ENCODE measurements at regions of chr19 and their contacts with region 1.

Region 1: DNA sequence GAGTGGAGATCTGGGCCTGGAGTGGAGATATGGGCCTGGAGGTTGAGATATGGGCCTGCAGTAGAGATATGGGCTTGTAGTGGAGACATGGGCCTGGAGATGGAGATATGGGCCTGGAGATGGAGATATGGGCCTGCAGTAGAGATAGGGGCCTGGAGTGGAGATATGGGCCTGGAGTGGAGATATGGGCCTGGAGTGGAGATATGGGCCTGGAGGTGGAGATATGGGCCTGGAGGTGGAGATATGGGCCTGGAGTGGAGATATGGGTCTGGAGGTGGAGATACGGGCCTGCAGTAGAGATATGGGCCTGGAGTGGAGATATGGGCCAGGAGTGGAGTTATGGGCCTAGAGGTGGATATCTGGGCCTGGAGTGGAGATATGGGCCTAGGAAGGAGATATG is 402 bp downstream of the KIR2DL3 start:
- DNase-seq: no peak
- H3K4me3 ChIP-seq: no peak overlapping the region
- H3K27ac ChIP-seq: no peak overlapping the region
- H3K4me1 ChIP-seq: no peaks in the 10 kb centered on the region
- H3K27me3 ChIP-seq: peaks cover 4% of the 10 kb centered on the region
- CTCF ChIP-seq: no peak

Region 2: DNA sequence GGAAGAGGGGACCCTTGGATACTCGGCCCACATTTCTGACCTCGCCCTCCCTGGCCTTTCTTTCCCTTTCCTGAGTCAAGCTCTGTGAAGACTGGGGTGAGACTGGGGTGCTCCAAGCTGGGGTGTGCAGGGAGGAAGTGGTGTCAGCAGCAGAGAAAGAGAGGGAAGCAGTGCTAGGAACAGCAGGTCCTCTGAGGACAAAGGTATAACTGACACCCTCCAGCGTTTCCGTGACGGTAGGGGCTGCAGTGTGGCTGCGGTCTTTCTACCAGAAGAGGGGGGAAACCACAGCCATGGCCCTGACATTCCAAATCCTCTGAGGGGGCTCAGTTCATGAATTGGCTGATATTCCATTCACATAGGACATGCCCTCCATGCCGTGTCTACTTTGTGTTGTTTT is 112.6 kb after region 1 on chr19:
- CTCF ChIA-PET with region 1: no interaction called
- POLR2A ChIA-PET with region 1: no interaction called
- intact Hi-C with region 1: loop called (anchors 5 kb)
- DNase-seq: no peak
- H3K4me3 ChIP-seq: no peak overlapping the region
- H3K27ac ChIP-seq: no peak overlapping the region
- H3K4me1 ChIP-seq: no peaks in the 10 kb centered on the region
- H3K27me3 ChIP-seq: peaks cover 15% of the 10 kb centered on the region
- CTCF ChIP-seq: no peak